Activated naive CD4-positive, alpha-beta T cell treated with anti-CD3 and anti-CD28 coated beads for 36 hours (primary cell): ENCODE measurements at regions of chr11 and their contacts with region 1.

Region 1: DNA sequence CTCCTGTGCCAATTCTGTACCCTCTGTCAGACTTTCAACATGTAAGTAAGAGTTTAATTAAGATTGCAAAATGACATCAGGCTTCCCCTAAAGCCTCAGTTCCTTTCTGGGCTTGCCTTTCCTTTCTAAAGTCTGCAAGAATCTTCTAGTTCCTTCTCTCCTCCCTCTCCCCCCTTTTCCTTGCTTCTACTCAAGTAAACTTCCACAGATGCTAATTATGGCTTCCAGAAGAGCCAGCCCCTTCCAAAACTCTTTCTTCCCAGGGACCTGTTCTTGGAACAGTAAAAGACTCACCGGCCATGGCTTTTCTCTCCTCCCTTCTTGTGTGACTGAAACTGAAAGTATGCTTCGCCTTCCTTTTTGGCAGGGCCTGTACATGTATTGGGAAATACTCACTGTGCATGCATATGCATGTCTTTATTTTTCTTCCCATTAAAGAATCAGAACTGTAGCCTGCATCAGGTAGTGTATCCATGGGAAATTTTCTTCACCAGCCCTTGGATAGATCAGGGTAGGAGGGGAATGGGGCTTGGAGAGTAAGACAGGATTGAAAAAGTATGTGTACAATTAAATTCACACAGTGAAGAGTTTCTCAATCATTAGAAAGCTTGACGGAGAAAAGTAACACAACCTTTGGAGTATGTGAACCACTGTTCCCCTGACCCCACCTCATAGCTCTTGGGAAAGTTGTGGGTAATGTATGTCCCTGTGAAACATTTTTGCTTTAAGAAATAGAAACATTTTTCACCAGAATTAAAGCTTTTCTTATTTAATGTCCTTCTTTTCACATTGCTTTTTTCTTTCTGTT is at the start of gene CASP1:
- DNase-seq: peak; percentile 56
- H3K4me3 Mint-ChIP-seq: peak within 1 kb of the TSS; percentile 92
- H3K27ac Mint-ChIP-seq: peak within 1 kb of the TSS; percentile 98
- H3K4me1 Mint-ChIP-seq: peaks cover 54% of the 10 kb centered on the region
- H3K27me3 Mint-ChIP-seq: no peaks in the 10 kb centered on the region
- total RNA-seq, gene CASP1: 23.8 to 24.5 TPM

Region 2: GRCh38 chr11:105044921-105045524 is 10.0 kb after region 1 on chr11 and contains the start of gene CARD16:
- CTCF ChIA-PET with region 1: interaction called, 5 read pairs
- intact Hi-C with region 1: loop called (anchors 1 kb)
- DNase-seq: peak; percentile 64
- H3K4me3 Mint-ChIP-seq: peak within 1 kb of the TSS; percentile 83
- H3K27ac Mint-ChIP-seq: peak within 1 kb of the TSS; percentile 82
- H3K4me1 Mint-ChIP-seq: peaks cover 46% of the 10 kb centered on the region
- H3K27me3 Mint-ChIP-seq: no peaks in the 10 kb centered on the region
- total RNA-seq, gene CARD16: 9.5 to 10.9 TPM

Region 3: GRCh38 chr11:105071089-105071732 is 36.2 kb after region 1 on chr11:
- CTCF ChIA-PET with region 1: no interaction called
- intact Hi-C with region 1: loop called (anchors 2 kb)
- DNase-seq: peak; percentile 8
- H3K4me3 Mint-ChIP-seq: peak overlapping the region; percentile 71
- H3K27ac Mint-ChIP-seq: peak overlapping the region; percentile 77
- H3K4me1 Mint-ChIP-seq: peaks cover 18% of the 10 kb centered on the region
- H3K27me3 Mint-ChIP-seq: no peaks in the 10 kb centered on the region

Region 4: DNA sequence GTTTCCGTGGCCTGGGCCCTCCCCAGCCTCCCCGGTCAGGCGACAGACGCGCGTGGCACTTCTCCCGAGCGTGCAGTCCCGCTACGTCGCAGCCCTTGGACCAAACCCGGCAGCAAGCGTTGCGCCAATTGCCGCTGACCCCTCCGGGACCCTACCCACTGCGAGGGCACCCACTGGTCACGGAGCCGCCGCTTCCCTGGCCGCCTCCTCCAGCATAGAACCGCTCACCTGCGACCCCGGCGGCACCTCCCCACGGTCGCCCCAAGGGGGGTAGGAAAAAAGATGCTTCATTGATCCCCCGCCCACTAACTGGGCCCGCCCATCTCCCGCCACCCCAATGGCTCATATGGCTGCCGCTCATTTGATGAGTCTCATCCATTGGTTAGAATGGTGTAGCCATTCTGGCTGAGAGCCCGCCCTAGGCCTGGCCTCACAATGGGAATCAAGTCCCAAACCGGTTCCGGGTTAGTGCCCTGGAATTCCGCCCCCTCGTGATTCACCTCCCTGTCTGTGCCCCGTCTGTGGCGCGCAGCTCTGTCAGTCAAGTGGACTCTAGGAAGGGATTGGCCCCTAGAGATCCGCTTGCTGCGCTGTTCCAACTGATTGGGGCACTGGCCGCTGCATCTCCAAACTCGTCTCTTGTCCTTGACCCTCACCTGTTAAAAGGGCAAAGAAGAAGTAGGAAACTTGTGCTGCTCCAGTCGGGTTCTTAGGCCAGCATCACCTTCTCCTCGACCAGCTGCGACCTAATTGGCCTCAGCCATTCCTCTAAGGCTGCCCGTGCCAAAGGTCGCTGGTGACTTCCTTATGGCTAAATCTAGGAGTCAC is 987.2 kb after region 1 on chr11 and contains the start of gene MSANTD4:
- CTCF ChIA-PET with region 1: no interaction called
- intact Hi-C with region 1: loop called (anchors 5 kb)
- DNase-seq: peak; percentile 99
- H3K4me3 Mint-ChIP-seq: peak within 1 kb of the TSS; percentile 93
- H3K27ac Mint-ChIP-seq: peak within 1 kb of the TSS; percentile 85
- H3K4me1 Mint-ChIP-seq: peaks cover 40% of the 10 kb centered on the region
- H3K27me3 Mint-ChIP-seq: peaks cover 3% of the 10 kb centered on the region
- total RNA-seq, gene MSANTD4: 11.5 to 12.0 TPM